MCF 10A (cell line): ENCODE measurements at regions of chr20 and their contacts with region 1.

Region 1: GRCh38 chr20:44166477-44166876 is 20.5 kb downstream of the JPH2 start:
- DNase-seq: peak; percentile 47
- H3K4me3 Mint-ChIP-seq: no peak overlapping the region
- H3K27ac Mint-ChIP-seq: no peak overlapping the region
- H3K4me1 Mint-ChIP-seq: peaks cover 23% of the 10 kb centered on the region
- H3K27me3 Mint-ChIP-seq: no peaks in the 10 kb centered on the region
- CTCF ChIP-seq: no peak

Region 2: DNA sequence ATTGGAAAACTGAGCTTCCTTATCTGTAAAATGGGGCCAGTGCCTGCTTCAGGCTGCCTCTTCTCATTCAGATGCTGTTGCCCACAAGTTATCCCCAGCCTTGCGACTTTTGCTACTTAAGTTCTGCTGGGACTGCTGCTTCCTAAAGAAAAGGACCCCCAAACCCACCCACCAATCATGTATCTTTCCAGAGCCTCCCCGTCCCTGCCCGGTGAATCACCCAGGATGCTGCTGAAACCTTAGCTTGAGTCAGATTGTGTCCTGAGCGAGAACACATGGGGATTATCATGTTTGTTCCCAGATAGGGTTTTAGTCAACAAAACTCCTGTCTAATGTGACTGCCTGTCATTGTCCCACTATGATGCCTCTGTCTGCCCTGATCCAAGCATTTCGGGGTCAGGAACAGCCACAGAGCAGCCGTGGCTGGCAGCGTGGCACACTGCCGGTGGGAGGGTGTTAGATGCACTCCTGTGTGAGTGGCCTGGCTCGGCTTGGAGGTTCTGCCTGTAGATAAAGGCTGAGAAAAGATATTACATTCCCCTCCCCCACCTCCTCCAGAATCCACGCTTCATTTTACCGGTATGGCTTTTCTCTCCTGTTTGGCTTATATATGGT is 171.9 kb before region 1 on chr20:
- CTCF ChIA-PET with region 1: no interaction called
- POLR2A ChIA-PET with region 1: no interaction called
- intact Hi-C with region 1: no loop called
- DNase-seq: no peak
- H3K4me3 Mint-ChIP-seq: no peak overlapping the region
- H3K27ac Mint-ChIP-seq: no peak overlapping the region
- H3K4me1 Mint-ChIP-seq: no peaks in the 10 kb centered on the region
- H3K27me3 Mint-ChIP-seq: no peaks in the 10 kb centered on the region
- CTCF ChIP-seq: no peak

Region 3: DNA sequence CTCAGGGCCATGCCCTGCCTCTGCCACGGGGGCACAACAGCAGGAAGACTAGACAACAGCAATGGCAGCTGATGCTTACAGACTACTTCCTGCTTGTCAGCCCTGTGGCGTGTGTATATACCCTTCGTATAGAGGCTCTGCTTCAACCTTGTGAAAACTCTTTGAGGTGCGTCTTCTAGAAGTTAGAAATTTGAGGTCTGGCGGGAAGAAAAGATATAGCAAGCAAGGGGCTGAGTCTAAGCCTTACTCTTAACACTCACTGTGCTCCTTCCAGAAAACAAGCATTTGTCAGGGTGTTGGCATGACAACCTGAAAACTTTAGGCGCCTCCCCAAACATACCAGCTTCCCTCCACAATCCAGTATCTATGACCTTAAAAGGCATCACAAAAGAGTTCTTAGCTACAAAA is 12.8 kb before region 1 on chr20:
- CTCF ChIA-PET with region 1: interaction called, 5 read pairs
- POLR2A ChIA-PET with region 1: interaction called, 16 read pairs
- intact Hi-C with region 1: no loop called
- DNase-seq: no peak
- H3K4me3 Mint-ChIP-seq: no peak overlapping the region
- H3K27ac Mint-ChIP-seq: no peak overlapping the region
- H3K4me1 Mint-ChIP-seq: peaks cover 15% of the 10 kb centered on the region
- H3K27me3 Mint-ChIP-seq: no peaks in the 10 kb centered on the region
- CTCF ChIP-seq: no peak

Region 4: DNA sequence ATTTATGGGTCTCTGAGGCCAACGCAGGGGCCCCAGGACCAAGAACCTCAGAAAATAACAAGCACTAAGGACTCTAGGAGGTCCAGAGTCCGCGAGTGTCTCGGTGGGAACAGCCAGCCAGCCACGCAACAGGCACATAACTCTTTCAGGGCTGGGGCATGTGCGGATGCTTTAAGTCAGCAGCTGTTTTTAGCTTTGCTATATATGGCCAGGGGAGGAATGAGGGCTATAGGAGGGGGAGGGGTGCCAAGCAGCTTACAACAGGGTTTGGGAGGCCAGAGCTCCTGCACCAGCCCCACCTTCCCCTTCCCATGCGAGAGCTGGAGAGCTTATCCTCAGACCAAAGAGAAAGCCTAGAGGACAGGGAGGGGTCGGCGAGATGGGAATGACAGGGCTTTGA is 14.3 kb after region 1 on chr20:
- CTCF ChIA-PET with region 1: interaction called, 6 read pairs
- POLR2A ChIA-PET with region 1: interaction called, 31 read pairs
- intact Hi-C with region 1: no loop called
- DNase-seq: no peak
- H3K4me3 Mint-ChIP-seq: no peak overlapping the region
- H3K27ac Mint-ChIP-seq: no peak overlapping the region
- H3K4me1 Mint-ChIP-seq: peaks cover 41% of the 10 kb centered on the region
- H3K27me3 Mint-ChIP-seq: no peaks in the 10 kb centered on the region
- CTCF ChIP-seq: no peak